G401 (cell line): ENCODE measurements at regions of chr10 and their contacts with region 1.

Region 1: GRCh38 chr10:110547139-110547761 is 20.2 kb upstream of the SMC3 start:
- DNase-seq: peak; percentile 89

Region 2: GRCh38 chr10:110354322-110354766 is 192.9 kb before region 1 on chr10:
- in situ Hi-C with region 1: loop called (anchors 10 kb)
- DNase-seq: peak; percentile 95

Region 3: DNA sequence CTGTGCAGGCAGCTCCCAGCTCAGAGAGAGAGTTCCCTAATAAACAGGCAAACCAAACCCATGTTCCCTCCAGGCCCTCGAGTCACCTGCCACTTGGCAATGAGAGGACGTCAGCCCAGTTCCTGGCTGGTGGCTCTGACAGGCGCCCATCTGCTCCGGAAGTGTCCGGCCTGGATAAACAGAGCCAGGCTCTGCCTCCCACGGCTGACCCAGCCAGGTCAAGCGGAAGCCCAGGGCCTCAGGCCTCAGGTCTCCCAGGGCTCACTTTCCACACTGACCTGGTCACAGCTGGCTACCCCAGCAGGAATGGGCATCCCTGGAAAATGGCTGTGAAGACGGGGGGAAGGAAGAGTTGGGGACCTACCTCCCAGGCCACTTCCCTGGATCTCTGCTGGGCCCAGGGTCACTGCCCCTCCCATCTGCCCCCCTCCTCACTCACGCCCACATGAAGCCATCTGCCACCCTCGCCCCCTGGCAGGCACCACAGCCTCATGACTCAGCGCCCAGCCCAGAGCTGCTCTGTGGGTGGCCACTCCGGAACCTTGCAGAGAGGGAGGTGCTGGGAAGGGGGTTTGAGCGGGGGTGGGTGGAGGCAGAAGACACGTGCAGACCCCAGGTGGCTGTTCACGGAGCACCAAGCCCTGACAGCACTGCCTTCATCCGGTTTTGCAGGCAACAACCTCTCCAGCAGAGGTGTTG is 87.0 kb before region 1 on chr10:
- in situ Hi-C with region 1: no loop called
- DNase-seq: peak; percentile 98

Region 4: GRCh38 chr10:110576220-110576619 is 29.0 kb after region 1 on chr10:
- in situ Hi-C with region 1: no loop called
- DNase-seq: no peak